Caco-2 (cell line): ENCODE measurements at regions of chr10 and their contacts with region 1.

Region 1: GRCh38 chr10:129030996-129031843 is 435.8 kb upstream of the MGMT start:
- DNase-seq: peak in 1 of 2 experiments; percentile 74
- H3K4me3 ChIP-seq: no peak overlapping the region
- H3K4me3 Mint-ChIP-seq: no peak overlapping the region
- H3K27ac Mint-ChIP-seq: no peak overlapping the region
- H3K4me1 ChIP-seq: no peaks in the 10 kb centered on the region
- H3K4me1 Mint-ChIP-seq: no peaks in the 10 kb centered on the region
- H3K27me3 ChIP-seq: peaks cover 2% of the 10 kb centered on the region
- H3K27me3 Mint-ChIP-seq: peaks cover 34% of the 10 kb centered on the region
- CTCF ChIP-seq: peak; percentile 87 to 93

Region 2: GRCh38 chr10:129335942-129336341 is 304.7 kb after region 1 on chr10:
- CTCF ChIA-PET with region 1: no interaction called
- POLR2A ChIA-PET with region 1: no interaction called
- intact Hi-C with region 1: loop called (anchors 2 kb)
- DNase-seq: no peak
- H3K4me3 ChIP-seq: no peak overlapping the region
- H3K4me3 Mint-ChIP-seq: no peak overlapping the region
- H3K27ac Mint-ChIP-seq: no peak overlapping the region
- H3K4me1 ChIP-seq: no peaks in the 10 kb centered on the region
- H3K4me1 Mint-ChIP-seq: no peaks in the 10 kb centered on the region
- H3K27me3 ChIP-seq: no peaks in the 10 kb centered on the region
- H3K27me3 Mint-ChIP-seq: peaks cover 15% of the 10 kb centered on the region
- CTCF ChIP-seq: no peak

Region 3: DNA sequence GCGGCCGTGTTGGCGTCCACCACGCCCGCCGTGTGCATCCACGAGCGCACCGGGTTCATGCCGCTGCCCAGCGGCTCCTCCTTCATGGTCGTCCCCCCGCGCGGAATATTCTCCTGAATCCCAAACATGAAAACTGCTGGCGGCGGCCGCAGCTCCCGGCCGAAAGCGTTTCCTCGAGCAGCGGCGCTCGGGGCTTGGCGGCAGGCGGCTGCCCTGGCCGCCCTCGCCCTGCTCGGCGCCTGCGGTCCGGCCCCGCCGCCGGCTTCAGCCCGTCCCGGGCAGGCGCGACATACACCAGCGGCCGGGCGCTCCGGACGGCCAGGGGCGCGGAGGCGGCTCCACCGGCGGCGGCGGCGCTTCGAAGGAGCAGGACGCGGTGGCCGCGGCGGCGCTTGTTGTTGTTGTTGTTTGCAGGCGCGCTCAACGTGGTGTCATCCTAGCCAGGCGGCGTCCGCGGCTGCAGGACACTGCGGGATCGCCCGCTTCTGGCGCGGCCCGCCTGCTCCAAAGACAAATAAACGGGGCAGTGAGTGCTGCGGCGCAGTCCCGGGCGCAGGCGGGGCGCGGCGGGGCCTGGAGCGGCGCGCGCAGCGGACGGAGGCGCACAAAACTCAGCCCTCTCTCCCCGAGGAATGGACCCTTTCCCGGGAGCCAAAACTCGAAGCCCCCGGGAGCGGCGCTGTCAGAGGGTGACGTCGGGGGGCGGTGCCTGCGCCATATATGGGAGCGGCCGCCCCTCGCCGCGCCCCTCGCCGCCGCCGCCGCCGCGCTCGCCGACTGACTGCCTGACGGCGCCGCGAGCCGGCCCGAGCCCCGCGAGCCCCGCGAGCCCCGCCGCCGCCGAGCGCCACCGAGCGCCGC is 932.7 kb after region 1 on chr10 and contains the start of gene EBF3:
- CTCF ChIA-PET with region 1: no interaction called
- POLR2A ChIA-PET with region 1: no interaction called
- intact Hi-C with region 1: loop called (anchors 2 kb)
- DNase-seq: peak; percentile 59 to 81
- H3K4me3 ChIP-seq: peak within 1 kb of the TSS; percentile 56
- H3K4me3 Mint-ChIP-seq: peak within 1 kb of the TSS; percentile 74
- H3K27ac Mint-ChIP-seq: no peak within 1 kb of the TSS
- H3K4me1 ChIP-seq: peaks cover 16% of the 10 kb centered on the region; the same call in 1 of the 2 replicates
- H3K4me1 Mint-ChIP-seq: no peaks in the 10 kb centered on the region
- H3K27me3 ChIP-seq: peaks cover 4% of the 10 kb centered on the region; the same call in 1 of the 2 replicates
- H3K27me3 Mint-ChIP-seq: peaks cover 33% of the 10 kb centered on the region
- CTCF ChIP-seq: no peak
- total RNA-seq, gene EBF3: 0.63 and 0.79 TPM in 2 replicates

Region 4: GRCh38 chr10:129971381-129972144 is 940.3 kb after region 1 on chr10:
- CTCF ChIA-PET with region 1: no interaction called
- POLR2A ChIA-PET with region 1: no interaction called
- intact Hi-C with region 1: loop called (anchors 2 kb)
- DNase-seq: peak in 1 of 2 experiments; percentile 80
- H3K4me3 ChIP-seq: peak overlapping the region; percentile 52
- H3K4me3 Mint-ChIP-seq: peak overlapping the region; percentile 52
- H3K27ac Mint-ChIP-seq: no peak overlapping the region
- H3K4me1 ChIP-seq: peaks cover 11% of the 10 kb centered on the region; the same call in 1 of the 2 replicates
- H3K4me1 Mint-ChIP-seq: no peaks in the 10 kb centered on the region
- H3K27me3 ChIP-seq: 0 out of 2 replicates have a peak, but pooled peaks cover 1% of the 10 kb centered on the region
- H3K27me3 Mint-ChIP-seq: peaks cover 19% of the 10 kb centered on the region
- CTCF ChIP-seq: peak; percentile 50